ENCODE measurements at regions of chr15 and their contacts with region 1.

Region 1: DNA sequence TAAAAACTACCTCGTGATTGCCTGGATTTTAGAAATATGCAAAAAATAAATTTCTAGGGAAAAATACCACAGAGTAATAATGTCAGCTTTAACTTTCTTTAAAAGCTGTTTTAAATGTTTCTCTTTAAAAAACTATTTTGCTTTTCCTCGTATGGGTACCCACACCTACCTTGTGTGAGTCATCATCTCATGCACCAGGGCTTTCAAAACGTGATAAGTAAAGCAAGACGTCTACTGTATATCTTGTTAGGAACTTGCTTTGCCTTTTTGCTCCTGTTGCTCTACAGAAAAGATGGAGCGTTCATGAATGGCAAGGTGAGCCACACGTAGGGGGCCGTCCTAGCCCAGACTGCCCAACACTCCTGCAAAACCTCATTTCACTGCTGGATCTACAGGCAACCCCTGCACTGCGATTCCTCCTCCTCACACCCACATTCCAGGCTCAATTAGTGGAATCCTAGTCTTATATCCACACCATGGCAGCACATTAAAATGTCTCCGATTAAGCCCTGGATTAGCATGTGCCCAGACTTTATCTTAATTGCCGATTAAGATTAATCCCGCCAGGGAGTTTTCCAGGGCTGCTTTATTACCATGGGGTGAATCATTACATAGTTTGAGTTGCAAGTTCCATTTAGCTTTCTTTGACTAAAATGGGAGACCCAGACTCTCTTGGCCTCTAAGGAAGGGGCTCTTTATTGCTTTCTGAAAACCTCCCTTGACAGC is 293.6 kb upstream of the ICE2 start:
- DNase-seq: peak; percentile 32
- H3K4me3 Mint-ChIP-seq: no peak overlapping the region
- H3K27ac Mint-ChIP-seq: peak overlapping the region; percentile 95
- H3K4me1 Mint-ChIP-seq: peaks cover 67% of the 10 kb centered on the region
- H3K27me3 Mint-ChIP-seq: no peaks in the 10 kb centered on the region

Region 2: DNA sequence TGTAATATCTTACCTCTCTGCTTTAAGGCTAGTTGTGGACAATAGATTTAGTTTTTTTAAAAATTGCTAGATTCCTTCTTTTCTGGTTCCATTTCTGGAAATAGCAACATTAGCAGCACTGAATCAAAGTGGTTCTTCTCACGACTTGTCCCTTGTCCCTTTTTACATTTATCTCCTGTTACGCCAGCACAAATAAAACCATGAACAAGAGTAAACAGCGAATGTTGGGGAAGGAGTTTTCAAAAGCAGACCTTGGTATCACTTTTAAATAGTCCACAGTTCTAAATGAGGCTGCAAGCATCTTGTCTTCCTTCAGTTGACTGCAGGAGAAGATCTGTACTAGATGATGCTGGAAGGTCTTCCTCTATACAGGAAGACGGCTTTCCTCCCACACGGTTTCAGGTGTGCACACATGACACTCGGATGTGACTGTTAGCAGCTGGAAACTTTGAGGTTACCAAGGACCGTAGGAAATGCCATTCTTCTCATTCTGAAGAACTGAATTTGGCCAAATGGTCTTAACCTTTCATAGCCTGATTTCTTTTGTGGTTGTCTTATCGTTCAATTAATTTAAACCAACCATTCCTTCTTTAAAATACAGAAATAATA is 42.6 kb before region 1 on chr15:
- CTCF ChIA-PET with region 1: interaction called, 3 read pairs
- intact Hi-C with region 1: loop called (anchors 2 kb)
- DNase-seq: peak; percentile 76
- H3K4me3 Mint-ChIP-seq: peak overlapping the region; percentile 65
- H3K27ac Mint-ChIP-seq: peak overlapping the region; percentile 82
- H3K4me1 Mint-ChIP-seq: peaks cover 42% of the 10 kb centered on the region
- H3K27me3 Mint-ChIP-seq: no peaks in the 10 kb centered on the region

Region 3: GRCh38 chr15:60760646-60761504 is 11.7 kb before region 1 on chr15:
- CTCF ChIA-PET with region 1: interaction called, 3 read pairs
- intact Hi-C with region 1: loop called (anchors 1 kb)
- DNase-seq: peak; percentile 46
- H3K4me3 Mint-ChIP-seq: no peak overlapping the region
- H3K27ac Mint-ChIP-seq: peak overlapping the region; percentile 25
- H3K4me1 Mint-ChIP-seq: peaks cover 33% of the 10 kb centered on the region
- H3K27me3 Mint-ChIP-seq: no peaks in the 10 kb centered on the region

Region 4: DNA sequence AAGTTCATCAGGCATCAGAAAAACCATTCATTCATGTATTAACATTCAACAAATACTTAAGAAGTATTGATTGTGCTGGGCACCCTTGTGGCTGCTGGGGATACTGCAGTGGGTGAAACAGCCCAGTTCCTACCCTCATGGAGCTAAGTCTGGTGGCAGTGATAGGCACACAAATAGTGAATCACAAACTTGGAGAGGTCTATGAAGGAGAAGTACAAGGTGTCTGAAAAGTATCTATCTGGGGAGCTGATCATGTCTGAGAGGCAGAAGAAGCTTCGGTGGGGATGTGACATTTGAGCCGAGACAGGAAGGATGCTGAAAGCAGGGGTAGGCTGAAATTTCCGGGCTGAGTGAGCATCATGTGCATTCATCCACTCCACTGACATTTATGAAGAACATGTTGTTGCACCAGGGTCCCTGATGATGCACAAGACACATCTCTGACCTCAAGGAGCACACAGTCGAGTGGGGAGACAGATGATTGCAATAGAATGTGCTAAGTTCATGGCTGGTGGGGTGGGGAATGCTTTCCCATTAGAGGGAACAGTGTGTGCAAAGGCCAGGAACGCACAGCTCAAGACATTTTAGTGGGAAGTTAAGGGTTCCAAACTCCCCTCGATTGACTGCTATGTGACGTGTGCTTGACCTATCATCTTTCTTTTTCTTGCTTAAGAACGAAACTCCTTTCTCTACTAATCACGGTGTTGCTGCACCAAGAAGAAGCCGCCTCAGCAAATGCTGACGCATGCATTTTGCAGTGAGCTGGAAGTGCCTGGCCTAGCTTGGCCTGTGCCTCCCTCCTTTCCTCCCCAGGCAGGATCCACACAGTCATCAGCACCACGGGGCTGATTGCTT is 15.5 kb after region 1 on chr15:
- CTCF ChIA-PET with region 1: interaction called, 16 read pairs
- intact Hi-C with region 1: no loop called
- DNase-seq: peak; percentile 70
- H3K4me3 Mint-ChIP-seq: peak overlapping the region; percentile 17
- H3K27ac Mint-ChIP-seq: peak overlapping the region; percentile 72
- H3K4me1 Mint-ChIP-seq: peaks cover 71% of the 10 kb centered on the region
- H3K27me3 Mint-ChIP-seq: no peaks in the 10 kb centered on the region

Region 5: GRCh38 chr15:61582092-61582491 is 809.5 kb after region 1 on chr15:
- CTCF ChIA-PET with region 1: no interaction called
- intact Hi-C with region 1: no loop called
- DNase-seq: no peak
- H3K4me3 Mint-ChIP-seq: no peak overlapping the region
- H3K27ac Mint-ChIP-seq: no peak overlapping the region
- H3K4me1 Mint-ChIP-seq: no peaks in the 10 kb centered on the region
- H3K27me3 Mint-ChIP-seq: peaks cover 14% of the 10 kb centered on the region

Measured in activated naive CD4-positive, alpha-beta T cell treated with anti-CD3 and anti-CD28 coated beads for 36 hours (primary cell).